ENCODE measurements at regions of chr1 and their contacts with region 1.

Region 1: GRCh38 chr1:52842643-52843309 is at the start of gene ZYG11A:
- DNase-seq: peak; percentile 86
- H3K4me3 Mint-ChIP-seq: peak within 1 kb of the TSS; percentile 58
- H3K27ac Mint-ChIP-seq: no peak within 1 kb of the TSS
- H3K4me1 Mint-ChIP-seq: peaks cover 2% of the 10 kb centered on the region
- H3K27me3 Mint-ChIP-seq: peaks cover 21% of the 10 kb centered on the region
- total RNA-seq, gene ZYG11A: 0.24 to 0.27 TPM

Region 2: GRCh38 chr1:52792036-52792435 is 50.7 kb before region 1 on chr1:
- CTCF ChIA-PET with region 1: no interaction called
- POLR2A ChIA-PET with region 1: no interaction called
- intact Hi-C with region 1: no loop called
- DNase-seq: no peak
- H3K4me3 Mint-ChIP-seq: no peak overlapping the region
- H3K27ac Mint-ChIP-seq: no peak overlapping the region
- H3K4me1 Mint-ChIP-seq: no peaks in the 10 kb centered on the region
- H3K27me3 Mint-ChIP-seq: no peaks in the 10 kb centered on the region

Region 3: DNA sequence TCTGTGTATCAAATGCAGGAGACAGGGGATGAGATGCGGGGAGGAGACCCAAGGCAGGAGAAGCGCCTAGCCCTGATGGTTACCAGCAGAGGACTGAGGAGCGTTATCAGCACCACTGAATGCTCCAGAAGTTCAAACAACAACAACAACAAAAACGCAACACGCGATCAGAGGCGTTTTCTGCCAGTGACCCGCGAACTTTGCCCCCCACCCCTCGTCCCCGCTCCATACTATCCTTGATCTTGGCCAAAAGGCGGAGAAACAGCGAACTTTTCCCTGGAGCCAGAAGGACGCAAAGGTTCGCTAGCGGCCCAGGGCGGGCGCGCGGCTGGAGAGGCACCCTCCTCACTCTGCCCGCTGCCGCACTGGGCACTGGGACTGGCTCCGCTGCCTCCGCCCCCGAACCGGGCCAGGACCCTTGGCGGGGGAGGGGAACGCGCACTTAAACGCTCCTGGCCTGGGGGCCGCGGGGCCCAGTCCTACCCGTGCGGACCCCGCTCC is 78.1 kb after region 1 on chr1:
- CTCF ChIA-PET with region 1: interaction called, 11 read pairs
- POLR2A ChIA-PET with region 1: interaction called, 3 read pairs
- intact Hi-C with region 1: no loop called
- DNase-seq: no peak
- H3K4me3 Mint-ChIP-seq: peak overlapping the region; percentile 76
- H3K27ac Mint-ChIP-seq: no peak overlapping the region
- H3K4me1 Mint-ChIP-seq: peaks cover 24% of the 10 kb centered on the region
- H3K27me3 Mint-ChIP-seq: no peaks in the 10 kb centered on the region

Measured in activated CD4-positive, alpha-beta memory T cell treated with anti-CD3 and anti-CD28 coated beads for 36 hours (primary cell).